ENCODE measurements at regions of chr2 and their contacts with region 1.

Region 1: GRCh38 chr2:173210270-173211196 is 134.9 kb downstream of the MAP3K20 start:
- DNase-seq: peak in 4 of 5 donors; percentile 68 to 83 (median 74)
- ATAC-seq: peak; percentile 86 to 92 (median 91)
- H3K4me3 ChIP-seq: no peak overlapping the region
- H3K27ac ChIP-seq: peak overlapping the region in 11 of 12 donors; percentile 8 to 85 (median 69)
- H3K4me1 ChIP-seq: peaks cover 0 to 61% (median 22%) of the 10 kb centered on the region in 12 donors
- H3K27me3 ChIP-seq: no peaks in the 10 kb centered on the region
- CTCF ChIP-seq: peak; percentile 77 to 96 (median 92)
- POLR2A ChIP-seq: no peak

Region 2: DNA sequence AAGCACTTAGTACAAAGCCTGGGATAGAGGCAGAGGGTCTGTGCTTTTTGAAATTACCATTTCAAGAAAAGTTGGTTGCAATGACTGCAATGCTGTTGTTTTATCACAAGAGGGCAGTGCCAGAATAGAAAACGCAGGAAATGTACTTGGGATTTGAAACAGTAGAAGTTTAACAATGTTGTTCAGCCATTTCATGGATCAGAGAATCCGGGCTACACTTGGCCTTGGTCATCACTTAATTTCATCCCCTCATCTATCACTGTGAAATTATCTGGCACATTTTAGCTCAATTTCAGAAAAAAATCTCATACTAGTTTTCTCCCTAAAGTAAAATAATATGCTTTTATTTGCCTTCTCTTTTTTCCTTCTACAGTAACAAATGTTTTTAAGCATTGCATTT is 404.0 kb before region 1 on chr2:
- intact Hi-C with region 1: loop called in 6 of 10 experiments (anchors 5 to 10 kb)
- DNase-seq: no peak
- ATAC-seq: peak in 2 of 4 donors; percentile 34 to 47
- H3K4me3 ChIP-seq: no peak overlapping the region
- H3K27ac ChIP-seq: no peak overlapping the region
- H3K4me1 ChIP-seq: peaks cover 0 to 6% (median 0%) of the 10 kb centered on the region in 12 donors
- H3K27me3 ChIP-seq: no peaks in the 10 kb centered on the region
- CTCF ChIP-seq: peak; percentile 77 to 94 (median 88)
- POLR2A ChIP-seq: no peak

Region 3: GRCh38 chr2:172977270-172978062 is 233.1 kb before region 1 on chr2:
- intact Hi-C with region 1: loop called in 2 of 10 experiments (anchors 5 kb)
- DNase-seq: no peak
- ATAC-seq: peak; percentile 51 to 73 (median 62)
- H3K4me3 ChIP-seq: no peak overlapping the region
- H3K27ac ChIP-seq: no peak overlapping the region
- H3K4me1 ChIP-seq: peaks cover 0 to 11% (median 5%) of the 10 kb centered on the region in 12 donors
- H3K27me3 ChIP-seq: no peaks in the 10 kb centered on the region
- CTCF ChIP-seq: peak in 8 of 12 donors; percentile 18 to 53 (median 30)
- POLR2A ChIP-seq: no peak

Region 4: GRCh38 chr2:173075781-173076580 is 134.6 kb before region 1 on chr2 and contains the start of gene MAP3K20:
- intact Hi-C with region 1: loop called (anchors 2 to 10 kb)
- DNase-seq: peak; percentile 81 to 91 (median 88)
- ATAC-seq: peak; percentile 67 to 89 (median 86)
- H3K4me3 ChIP-seq: peak within 1 kb of the TSS; percentile 64 to 85 (median 78)
- H3K27ac ChIP-seq: peak within 1 kb of the TSS; percentile 90 to 98 (median 96)
- H3K4me1 ChIP-seq: peaks cover 0 to 47% (median 18%) of the 10 kb centered on the region in 12 donors
- H3K27me3 ChIP-seq: no peaks in the 10 kb centered on the region
- CTCF ChIP-seq: peak in 11 of 12 donors; percentile 11 to 71 (median 54)
- POLR2A ChIP-seq: peak in 1 of 2 donors; percentile 71
- total RNA-seq, gene MAP3K20: 275 to 487 (median 451) TPM

Region 5: DNA sequence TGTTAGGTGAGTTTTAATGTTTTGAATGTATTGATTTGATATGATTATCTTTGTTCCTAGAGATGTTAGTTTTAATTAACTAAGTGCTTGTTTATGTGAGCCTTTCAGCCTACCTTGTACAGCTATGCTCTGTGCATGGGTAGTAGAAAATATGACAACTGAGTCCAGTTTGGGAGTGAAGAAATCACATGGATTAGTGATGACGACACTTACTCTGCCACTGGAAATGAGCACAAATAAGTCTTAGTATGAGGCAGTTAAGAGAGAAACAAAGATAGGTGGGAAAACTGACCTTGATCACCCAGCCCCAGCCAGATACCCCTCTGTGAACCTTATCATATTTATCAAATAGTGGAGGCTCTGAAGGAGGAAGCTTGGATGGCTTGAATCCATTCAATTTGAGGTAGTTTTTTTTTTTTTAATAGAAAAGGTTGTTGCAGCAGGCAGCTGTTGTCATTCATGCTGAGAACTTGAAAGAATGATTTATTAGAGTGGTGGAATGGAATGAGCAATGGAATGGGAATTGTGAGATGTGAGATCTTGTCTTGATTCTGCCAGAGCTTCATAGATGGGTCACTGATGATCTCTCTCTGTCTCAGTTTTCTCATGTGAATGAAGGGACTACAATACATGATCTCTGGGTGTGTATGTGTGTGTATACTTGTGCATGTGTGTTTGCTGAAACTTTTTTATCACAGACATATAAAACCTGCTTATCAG is 38.4 kb before region 1 on chr2:
- intact Hi-C with region 1: loop called in 1 of 10 experiments (anchors 2 kb)
- DNase-seq: no peak
- ATAC-seq: no peak
- H3K4me3 ChIP-seq: no peak overlapping the region
- H3K27ac ChIP-seq: peak overlapping the region in 1 of 12 donors; percentile 14
- H3K4me1 ChIP-seq: peaks cover 0 to 32% (median 7%) of the 10 kb centered on the region in 12 donors
- H3K27me3 ChIP-seq: no peaks in the 10 kb centered on the region
- CTCF ChIP-seq: no peak
- POLR2A ChIP-seq: no peak

Region 6: DNA sequence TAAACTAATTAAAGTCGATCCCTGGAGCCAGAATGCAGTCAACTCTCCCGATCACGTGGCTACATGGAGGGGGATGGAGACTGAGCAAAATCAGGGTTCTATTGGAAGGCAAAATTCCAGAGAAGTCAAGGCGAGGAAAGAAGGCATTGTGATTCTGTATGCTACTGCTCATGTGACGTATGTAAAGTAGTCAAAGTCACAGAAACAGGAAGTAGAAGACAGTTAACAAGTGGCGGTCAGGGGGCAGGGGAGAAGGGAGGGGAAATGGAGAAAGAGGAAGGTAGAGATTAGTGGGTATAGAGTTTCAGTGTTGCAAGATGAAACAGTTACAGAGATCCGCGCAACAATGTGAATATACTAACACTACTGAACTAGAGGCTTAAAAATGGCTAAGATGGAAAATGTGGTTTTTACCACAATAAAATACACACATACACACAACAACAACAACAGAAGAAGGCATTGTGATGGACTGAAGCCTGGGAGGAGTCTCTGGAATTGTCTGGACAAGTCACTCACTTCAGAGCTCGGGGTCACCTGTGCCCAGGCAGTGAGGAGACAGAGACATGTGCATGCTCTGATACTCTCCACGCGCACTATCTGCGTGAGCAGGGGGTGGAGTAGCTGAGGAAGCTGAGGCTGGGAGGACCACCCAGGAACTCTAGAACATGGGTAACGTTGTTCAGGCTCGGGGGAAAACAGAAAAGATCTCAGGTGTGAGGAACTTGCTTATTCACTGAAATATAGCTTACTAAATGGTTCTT is 54.3 kb after region 1 on chr2:
- intact Hi-C with region 1: no loop called
- DNase-seq: peak in 3 of 5 donors; percentile 8 to 41 (median 24)
- ATAC-seq: peak in 2 of 4 donors; percentile 69 to 83
- H3K4me3 ChIP-seq: no peak overlapping the region
- H3K27ac ChIP-seq: peak overlapping the region in 1 of 12 donors; percentile 27
- H3K4me1 ChIP-seq: peaks cover 0 to 18% (median 0%) of the 10 kb centered on the region in 12 donors
- H3K27me3 ChIP-seq: no peaks in the 10 kb centered on the region
- CTCF ChIP-seq: no peak
- POLR2A ChIP-seq: no peak

Region 7: GRCh38 chr2:173307293-173307692 is 96.8 kb after region 1 on chr2:
- intact Hi-C with region 1: no loop called
- DNase-seq: no peak
- ATAC-seq: no peak
- H3K4me3 ChIP-seq: no peak overlapping the region
- H3K27ac ChIP-seq: no peak overlapping the region
- H3K4me1 ChIP-seq: no peaks in the 10 kb centered on the region
- H3K27me3 ChIP-seq: no peaks in the 10 kb centered on the region
- CTCF ChIP-seq: no peak
- POLR2A ChIP-seq: no peak

Measured in heart left ventricle (tissue), 16 donors.